Heart left ventricle (tissue), 16 donors: ENCODE measurements at regions of chr2 and their contacts with region 1.

Region 1: GRCh38 chr2:120174963-120175581 is 48.1 kb downstream of the TMEM185B start:
- DNase-seq: no peak
- ATAC-seq: peak in 2 of 4 donors; percentile 18 to 51
- H3K4me3 ChIP-seq: no peak overlapping the region
- H3K27ac ChIP-seq: no peak overlapping the region
- H3K4me1 ChIP-seq: peaks cover 0 to 20% (median 8%) of the 10 kb centered on the region in 12 donors
- H3K27me3 ChIP-seq: no peaks in the 10 kb centered on the region
- CTCF ChIP-seq: peak; percentile 66 to 83 (median 77)
- POLR2A ChIP-seq: no peak

Region 2: DNA sequence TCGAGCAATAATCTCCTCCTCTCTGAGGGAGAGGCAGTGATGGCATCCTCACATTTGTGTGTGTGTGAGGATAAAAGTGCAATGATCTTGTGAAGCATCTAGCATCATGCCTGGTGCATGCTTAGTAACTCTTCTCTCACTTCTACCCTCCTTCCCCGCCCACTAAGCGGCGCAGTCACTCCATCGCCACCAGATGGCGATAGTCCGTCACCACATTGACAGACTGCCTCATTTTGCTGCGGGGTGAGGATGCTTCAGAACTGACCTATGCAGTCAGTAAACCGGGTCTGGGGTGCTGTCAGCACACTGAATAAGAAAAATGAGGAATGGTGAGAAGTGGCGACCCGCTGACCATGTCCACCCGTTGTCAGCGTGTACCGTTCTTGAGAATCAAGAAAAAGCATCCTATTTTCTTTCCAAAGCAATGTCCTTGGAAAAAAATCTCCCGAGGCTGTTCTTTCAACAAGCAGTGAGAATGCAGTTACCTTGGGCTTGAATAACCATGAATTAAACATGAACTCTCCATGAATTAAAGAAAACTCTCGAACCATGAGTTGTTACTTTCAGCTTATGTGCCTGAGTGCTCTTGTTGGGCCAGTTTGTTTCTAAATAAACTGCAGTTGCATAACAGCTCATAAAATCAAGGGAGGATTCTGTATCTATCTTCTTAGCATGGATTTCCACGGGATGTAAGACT is 533.4 kb before region 1 on chr2:
- intact Hi-C with region 1: loop called in 6 of 10 experiments (anchors 5 to 10 kb)
- DNase-seq: peak; percentile 56 to 74 (median 66)
- ATAC-seq: peak; percentile 56 to 94 (median 88)
- H3K4me3 ChIP-seq: no peak overlapping the region
- H3K27ac ChIP-seq: no peak overlapping the region
- H3K4me1 ChIP-seq: peaks cover 0 to 14% (median 8%) of the 10 kb centered on the region in 12 donors
- H3K27me3 ChIP-seq: peaks cover 0 to 6% (median 0%) of the 10 kb centered on the region in 9 donors
- CTCF ChIP-seq: peak; percentile 86 to 95 (median 92)
- POLR2A ChIP-seq: no peak

Region 3: GRCh38 chr2:119753041-119753929 is 421.8 kb before region 1 on chr2:
- intact Hi-C with region 1: loop called (anchors 2 to 5 kb)
- DNase-seq: no peak
- ATAC-seq: peak; percentile 58 to 72 (median 61)
- H3K4me3 ChIP-seq: no peak overlapping the region
- H3K27ac ChIP-seq: no peak overlapping the region
- H3K4me1 ChIP-seq: peaks cover 0 to 10% (median 1%) of the 10 kb centered on the region in 12 donors
- H3K27me3 ChIP-seq: no peaks in the 10 kb centered on the region
- CTCF ChIP-seq: peak; percentile 67 to 86 (median 79)
- POLR2A ChIP-seq: no peak

Region 4: DNA sequence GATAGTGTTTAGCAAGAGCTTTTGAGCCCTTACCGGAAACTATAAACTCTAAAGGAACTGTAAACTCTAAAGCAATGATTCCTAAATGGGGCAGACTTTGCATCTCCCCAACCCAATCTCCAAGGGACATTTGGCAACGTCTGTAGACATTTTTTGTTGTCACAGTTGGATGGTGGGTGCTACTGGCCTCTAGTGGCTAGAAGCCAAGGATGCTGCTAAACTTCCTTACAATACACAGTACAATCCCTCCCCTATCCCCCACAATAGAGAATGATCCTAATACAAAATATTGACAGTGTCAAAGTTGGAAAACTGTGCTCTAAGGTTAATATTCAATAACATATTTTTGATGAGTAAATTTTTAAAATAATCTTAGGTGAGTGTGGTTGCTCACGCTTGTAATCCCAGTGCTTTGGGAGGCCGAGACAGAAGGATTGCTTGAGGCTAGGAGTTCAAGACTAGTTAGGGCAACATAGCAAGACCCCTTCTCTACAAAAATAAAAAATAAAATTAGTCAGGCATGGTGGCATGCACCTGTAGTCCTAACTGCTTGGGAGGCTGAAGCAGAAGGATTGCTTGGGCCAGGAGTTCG is 348.6 kb before region 1 on chr2:
- intact Hi-C with region 1: loop called in 5 of 10 experiments (anchors 10 kb)
- DNase-seq: no peak
- ATAC-seq: peak in 3 of 4 donors; percentile 62 to 70 (median 64)
- H3K4me3 ChIP-seq: no peak overlapping the region
- H3K27ac ChIP-seq: no peak overlapping the region
- H3K4me1 ChIP-seq: peaks cover 0 to 14% (median 5%) of the 10 kb centered on the region in 12 donors
- H3K27me3 ChIP-seq: no peaks in the 10 kb centered on the region
- CTCF ChIP-seq: peak; percentile 40 to 66 (median 52)
- POLR2A ChIP-seq: no peak

Region 5: DNA sequence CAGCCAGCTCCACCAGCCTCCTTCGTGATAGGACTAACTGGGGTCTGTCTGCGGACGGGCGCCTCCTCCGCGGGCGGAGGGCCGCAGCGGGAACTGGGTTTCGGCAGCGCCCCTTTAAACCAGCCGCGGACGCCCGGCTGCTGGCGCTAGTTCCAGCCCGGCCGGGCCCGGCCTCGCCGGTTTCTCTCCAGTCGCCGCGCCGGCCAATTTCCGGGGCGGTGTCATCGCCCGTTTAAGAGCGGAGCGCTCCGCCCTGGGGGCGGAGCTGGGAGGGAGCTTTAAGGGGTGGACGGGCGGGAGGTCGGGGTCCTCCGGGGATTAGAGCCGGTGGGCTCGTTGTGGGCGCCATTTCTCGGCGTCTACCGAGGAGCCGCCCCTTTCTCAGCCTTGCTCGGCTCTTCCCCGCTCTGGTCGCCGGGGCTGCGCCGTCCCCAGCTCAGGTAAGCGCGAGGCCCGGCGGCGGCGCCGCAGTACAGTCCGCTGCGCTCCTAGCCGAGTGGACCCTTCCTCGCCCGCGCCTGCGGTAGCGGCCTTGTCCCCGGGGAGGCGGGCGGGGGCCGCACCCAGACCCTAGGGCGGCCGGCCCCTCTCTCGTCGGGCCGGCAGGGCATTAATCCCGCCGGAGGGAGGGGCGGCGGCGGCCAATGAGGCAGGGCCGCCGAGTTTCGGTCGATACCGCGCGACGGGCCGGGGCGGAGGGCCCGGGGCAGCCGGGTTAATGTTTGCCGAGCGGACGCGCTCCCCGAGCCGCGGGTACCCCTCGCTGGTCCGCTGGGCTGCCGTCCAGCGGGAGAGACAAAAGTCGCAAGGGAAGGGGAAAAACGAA is 162.1 kb before region 1 on chr2 and contains the start of gene EPB41L5:
- intact Hi-C with region 1: loop called in 1 of 10 experiments (anchors 5 kb)
- DNase-seq: peak; percentile 92 to 96 (median 95)
- ATAC-seq: peak; percentile 97 to 99 (median 99)
- H3K4me3 ChIP-seq: peak within 1 kb of the TSS; percentile 73 to 100 (median 94)
- H3K27ac ChIP-seq: peak within 1 kb of the TSS; percentile 64 to 95 (median 84)
- H3K4me1 ChIP-seq: peaks cover 0 to 25% (median 14%) of the 10 kb centered on the region in 12 donors
- H3K27me3 ChIP-seq: no peaks in the 10 kb centered on the region
- CTCF ChIP-seq: peak in 2 of 12 donors; percentile 15 to 20
- POLR2A ChIP-seq: peak; percentile 49 to 84
- total RNA-seq, gene EPB41L5: 7.6 to 16.9 (median 11.2) TPM

Region 6: DNA sequence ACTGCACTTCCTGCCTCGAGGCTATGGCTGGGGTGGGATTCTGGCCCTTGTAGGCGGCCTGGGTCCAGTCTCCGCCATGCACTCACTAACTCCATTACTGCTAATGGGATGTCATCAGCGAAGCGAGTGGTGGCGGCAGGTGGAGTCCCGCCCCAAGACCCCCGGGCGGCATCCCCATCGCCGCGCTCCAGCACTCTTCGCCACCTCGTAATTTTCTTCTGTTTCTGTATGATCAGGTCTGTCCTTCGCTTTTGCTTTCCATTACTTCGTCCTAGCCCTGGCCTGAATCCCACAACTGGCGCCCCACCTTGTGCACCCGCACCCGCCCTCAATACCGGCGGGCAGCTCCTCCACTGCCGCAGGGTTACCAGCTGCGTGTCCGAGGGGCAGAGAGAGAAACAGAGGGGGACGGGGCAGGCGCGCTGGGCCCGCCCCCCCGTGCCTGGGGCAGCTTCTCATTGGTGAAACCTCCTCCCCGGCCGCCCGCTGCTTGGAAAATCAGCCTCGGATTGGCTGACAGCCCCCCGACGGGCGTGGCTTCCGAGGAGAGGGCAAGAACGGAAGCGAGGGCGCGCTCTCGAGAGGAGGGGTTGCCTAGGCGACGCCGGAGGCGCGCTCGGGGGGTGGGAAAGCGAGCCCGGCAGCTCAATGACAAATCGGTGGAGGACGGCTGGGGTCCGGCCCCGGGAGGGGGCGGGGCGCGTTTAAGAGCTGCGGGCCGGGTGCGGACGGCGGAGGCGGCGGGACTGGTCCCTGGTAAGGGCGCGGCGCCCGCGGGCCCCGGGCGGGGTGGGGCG is 77.4 kb after region 1 on chr2 and contains the start of gene RALB:
- intact Hi-C with region 1: loop called in 1 of 10 experiments (anchors 2 kb)
- DNase-seq: peak; percentile 100
- ATAC-seq: peak; percentile 96 to 97 (median 96)
- H3K4me3 ChIP-seq: peak within 1 kb of the TSS; percentile 57 to 97 (median 87)
- H3K27ac ChIP-seq: peak within 1 kb of the TSS; percentile 89 to 99 (median 94)
- H3K4me1 ChIP-seq: peaks cover 2 to 53% (median 43%) of the 10 kb centered on the region in 12 donors
- H3K27me3 ChIP-seq: no peaks in the 10 kb centered on the region
- CTCF ChIP-seq: no peak
- POLR2A ChIP-seq: peak in 1 of 2 donors; percentile 76
- total RNA-seq, gene RALB: 35.7 to 59.9 (median 45.1) TPM

Region 7: GRCh38 chr2:120596990-120597594 is 422.0 kb after region 1 on chr2:
- intact Hi-C with region 1: no loop called
- DNase-seq: peak in 4 of 5 donors; percentile 40 to 60 (median 48)
- ATAC-seq: peak; percentile 57 to 78 (median 64)
- H3K4me3 ChIP-seq: no peak overlapping the region
- H3K27ac ChIP-seq: peak overlapping the region in 6 of 12 donors; percentile 17 to 80 (median 69)
- H3K4me1 ChIP-seq: peaks cover 0 to 35% (median 21%) of the 10 kb centered on the region in 12 donors
- H3K27me3 ChIP-seq: peaks cover 0 to 2% (median 0%) of the 10 kb centered on the region in 9 donors
- CTCF ChIP-seq: no peak
- POLR2A ChIP-seq: no peak